Activated T-helper 2 cell treated with anti-CD3 and anti-CD28 coated beads, Interferon-gamma antibody, Interleukin-2, Interleukin-4, amounts not matched to agents 10 μg/mL and 5 μg/mL and 100 μg/mL, durations not matched to agents 14 hours and 24 hours and 36 hours (primary cell): ENCODE measurements at regions of chr1 and their contacts with region 1.

Region 1: DNA sequence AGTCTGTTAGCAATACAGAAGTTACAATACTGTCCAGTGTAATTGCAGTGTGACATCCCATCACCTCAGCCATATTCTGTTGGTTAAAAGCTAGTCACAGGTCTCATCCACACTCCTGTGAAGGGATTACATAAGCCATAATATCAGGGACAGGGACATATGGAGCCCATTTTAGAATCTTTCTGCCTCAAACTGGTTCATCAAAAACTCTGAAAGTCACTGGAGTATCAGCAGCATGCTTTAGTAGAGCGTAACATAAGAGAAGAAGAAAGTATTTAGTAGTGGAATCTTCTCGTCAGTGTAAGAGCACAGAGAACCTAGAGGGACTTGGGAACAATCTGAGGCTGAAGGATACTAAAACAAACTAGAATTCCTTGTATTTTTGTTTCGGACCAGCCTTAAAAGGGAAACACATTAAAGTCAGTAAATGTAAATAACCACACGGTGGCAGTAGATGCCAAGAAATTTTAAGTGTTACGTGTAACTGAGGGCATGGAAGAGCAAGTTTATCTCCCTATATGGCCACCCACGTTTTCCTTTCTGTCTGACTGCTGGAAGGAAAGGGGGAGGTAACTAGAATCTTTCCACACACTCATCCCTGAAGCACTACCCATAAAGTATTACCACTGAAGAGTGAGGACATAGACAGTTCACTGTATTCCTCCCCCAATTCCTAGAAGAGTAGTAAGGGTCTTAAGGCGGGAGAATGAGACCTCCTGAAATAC is 41.6 kb upstream of the AGL start:
- DNase-seq: no peak
- H3K4me3 Mint-ChIP-seq: no peak overlapping the region
- H3K27ac Mint-ChIP-seq: peak overlapping the region; percentile 47
- H3K4me1 Mint-ChIP-seq: peaks cover 17% of the 10 kb centered on the region
- H3K27me3 Mint-ChIP-seq: peaks cover 17% of the 10 kb centered on the region

Region 2: GRCh38 chr1:99717005-99717404 is 91.5 kb before region 1 on chr1:
- intact Hi-C with region 1: no loop called
- DNase-seq: no peak
- H3K4me3 Mint-ChIP-seq: no peak overlapping the region
- H3K27ac Mint-ChIP-seq: no peak overlapping the region
- H3K4me1 Mint-ChIP-seq: no peaks in the 10 kb centered on the region
- H3K27me3 Mint-ChIP-seq: no peaks in the 10 kb centered on the region

Region 3: GRCh38 chr1:99849744-99850458 is 41.3 kb after region 1 on chr1 and contains the start of gene AGL:
- intact Hi-C with region 1: loop called (anchors 5 kb)
- DNase-seq: peak; percentile 81
- H3K4me3 Mint-ChIP-seq: peak within 1 kb of the TSS; percentile 96
- H3K27ac Mint-ChIP-seq: peak within 1 kb of the TSS; percentile 80
- H3K4me1 Mint-ChIP-seq: peaks cover 23% of the 10 kb centered on the region
- H3K27me3 Mint-ChIP-seq: no peaks in the 10 kb centered on the region
- total RNA-seq, gene AGL: 13.2 and 13.8 TPM in 2 replicates

Region 4: GRCh38 chr1:99869304-99869703 is 60.8 kb after region 1 on chr1:
- intact Hi-C with region 1: no loop called
- DNase-seq: no peak
- H3K4me3 Mint-ChIP-seq: no peak overlapping the region
- H3K27ac Mint-ChIP-seq: no peak overlapping the region
- H3K4me1 Mint-ChIP-seq: no peaks in the 10 kb centered on the region
- H3K27me3 Mint-ChIP-seq: no peaks in the 10 kb centered on the region

Region 5: GRCh38 chr1:99969729-99970621 is 161.4 kb after region 1 on chr1 and contains the start of gene SLC35A3:
- intact Hi-C with region 1: loop called (anchors 5 kb)
- DNase-seq: peak; percentile 76
- H3K4me3 Mint-ChIP-seq: peak within 1 kb of the TSS; percentile 98
- H3K27ac Mint-ChIP-seq: peak within 1 kb of the TSS; percentile 92
- H3K4me1 Mint-ChIP-seq: peaks cover 22% of the 10 kb centered on the region
- H3K27me3 Mint-ChIP-seq: no peaks in the 10 kb centered on the region
- total RNA-seq, gene SLC35A3: 15.0 and 15.9 TPM in 2 replicates

Region 6: DNA sequence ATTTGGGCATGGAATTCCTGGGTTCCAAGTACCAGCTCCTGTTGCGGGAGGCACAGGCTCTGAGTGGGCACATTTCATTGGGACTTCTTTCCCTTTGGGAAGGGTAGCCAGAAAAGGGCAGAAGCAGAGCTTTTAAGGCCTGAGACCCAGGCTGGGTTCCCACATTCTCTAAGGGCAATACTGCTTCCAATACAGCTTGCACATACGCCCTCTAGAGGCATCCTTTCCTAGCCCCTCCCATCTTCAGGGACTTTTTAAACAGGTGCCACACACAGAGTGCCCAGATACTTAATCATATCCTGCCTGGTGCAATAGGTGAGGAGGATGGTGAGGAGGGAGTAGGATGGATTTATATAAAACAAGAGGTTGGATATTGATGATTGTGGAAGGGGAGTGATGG is 735.1 kb after region 1 on chr1:
- intact Hi-C with region 1: loop called (anchors 5 kb)
- DNase-seq: no peak
- H3K4me3 Mint-ChIP-seq: no peak overlapping the region
- H3K27ac Mint-ChIP-seq: no peak overlapping the region
- H3K4me1 Mint-ChIP-seq: no peaks in the 10 kb centered on the region
- H3K27me3 Mint-ChIP-seq: peaks cover 45% of the 10 kb centered on the region

Region 7: DNA sequence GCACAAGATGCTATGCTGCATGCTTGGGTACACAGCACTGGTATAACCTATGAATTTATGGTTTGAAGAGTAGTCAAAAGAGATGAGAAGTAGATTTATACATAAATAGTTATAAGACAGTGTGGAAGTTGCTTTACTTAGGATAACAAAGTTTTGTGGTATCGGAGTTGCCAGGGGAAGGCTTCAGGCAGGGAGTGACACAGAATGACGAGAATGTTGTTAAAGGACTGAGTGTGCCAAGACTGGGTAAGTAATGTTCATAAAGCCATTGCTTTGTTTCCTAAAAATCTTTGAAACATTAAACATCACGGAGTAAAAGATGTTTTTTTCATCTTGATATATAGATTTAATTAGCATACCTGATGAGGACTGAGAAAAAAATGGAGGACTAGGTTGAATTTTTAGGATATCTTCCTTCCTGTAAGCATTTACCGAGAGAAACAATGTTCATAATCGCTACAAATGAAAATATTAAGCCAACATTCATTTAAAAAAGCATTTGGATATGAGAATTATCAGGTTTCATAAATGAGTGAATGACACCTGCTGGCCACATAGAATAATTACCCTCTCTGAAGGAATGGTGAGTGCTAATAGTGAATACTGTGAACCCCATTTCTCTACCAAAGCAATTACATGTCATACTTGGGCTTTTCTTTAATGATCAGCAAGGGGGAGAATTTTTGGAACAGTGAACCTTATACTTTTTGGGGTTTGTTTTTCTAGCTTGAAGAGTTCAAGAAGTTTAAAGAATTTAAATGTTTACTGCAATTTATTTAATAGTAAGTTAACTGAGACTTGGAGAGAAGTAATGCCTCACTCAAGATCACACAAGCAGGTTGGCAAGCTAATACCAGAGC is 1057.7 kb after region 1 on chr1:
- intact Hi-C with region 1: loop called (anchors 1 kb)
- DNase-seq: no peak
- H3K4me3 Mint-ChIP-seq: no peak overlapping the region
- H3K27ac Mint-ChIP-seq: no peak overlapping the region
- H3K4me1 Mint-ChIP-seq: no peaks in the 10 kb centered on the region
- H3K27me3 Mint-ChIP-seq: peaks cover 4% of the 10 kb centered on the region